Esophagus muscularis mucosa (tissue), 4 donors: ENCODE measurements at regions of chr9 and their contacts with region 1.

Region 1: GRCh38 chr9:131608493-131609037 is 63.2 kb downstream of the PRRT1B start:
- DNase-seq: peak; percentile 94
- H3K4me3 ChIP-seq: peak overlapping the region; percentile 0 to 34 (median 25)
- H3K27ac ChIP-seq: peak overlapping the region; percentile 86 to 88 (median 88)
- H3K4me1 ChIP-seq: peaks cover 43 to 58% (median 46%) of the 10 kb centered on the region in 4 donors
- H3K27me3 ChIP-seq: no peaks in the 10 kb centered on the region
- CTCF ChIP-seq: no peak
- EP300 ChIP-seq: no peak
- POLR2A ChIP-seq: no peak

Region 2: GRCh38 chr9:131523451-131524435 is 84.8 kb before region 1 on chr9:
- intact Hi-C with region 1: no loop called
- DNase-seq: no peak
- H3K4me3 ChIP-seq: no peak overlapping the region
- H3K27ac ChIP-seq: no peak overlapping the region
- H3K4me1 ChIP-seq: no peaks in the 10 kb centered on the region
- H3K27me3 ChIP-seq: no peaks in the 10 kb centered on the region
- CTCF ChIP-seq: no peak
- EP300 ChIP-seq: no peak
- POLR2A ChIP-seq: no peak

Region 3: DNA sequence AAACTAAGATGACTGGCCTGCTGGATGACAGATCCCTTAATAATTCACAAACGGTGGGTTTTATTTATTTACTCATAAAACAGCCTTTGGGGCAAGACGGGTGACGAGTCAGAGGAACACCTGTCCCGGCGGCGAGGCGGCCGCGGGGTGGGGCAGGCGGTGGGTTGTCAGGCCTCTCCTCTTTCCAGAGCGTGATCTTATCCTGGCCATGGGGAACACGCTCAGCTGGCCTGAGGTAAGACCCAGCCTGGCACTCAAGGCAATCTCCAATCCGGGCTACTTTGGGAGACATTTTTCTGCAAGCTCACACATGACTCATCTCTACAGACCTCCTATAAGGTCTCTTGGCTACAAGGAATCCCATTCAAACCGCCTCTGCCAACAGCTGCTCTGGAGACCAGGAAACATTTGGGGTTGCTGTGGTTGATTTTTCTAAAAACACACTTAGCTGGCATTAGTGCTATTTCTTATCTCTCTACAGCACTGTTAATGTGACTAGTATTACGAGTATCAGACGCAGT is 125.0 kb after region 1 on chr9:
- intact Hi-C with region 1: loop called (anchors 2 kb)
- DNase-seq: no peak
- H3K4me3 ChIP-seq: no peak overlapping the region
- H3K27ac ChIP-seq: peak overlapping the region; percentile 49 to 76 (median 75)
- H3K4me1 ChIP-seq: peaks cover 86 to 100% (median 96%) of the 10 kb centered on the region in 4 donors
- H3K27me3 ChIP-seq: no peaks in the 10 kb centered on the region
- CTCF ChIP-seq: no peak
- EP300 ChIP-seq: no peak
- POLR2A ChIP-seq: no peak